Activated naive CD4-positive, alpha-beta T cell treated with anti-CD3 and anti-CD28 coated beads for 36 hours (primary cell): ENCODE measurements at regions of chr10 and their contacts with region 1.

Region 1: GRCh38 chr10:79487296-79488194 is 24.8 kb upstream of the EIF5AL1 start:
- DNase-seq: peak; percentile 47
- H3K4me3 Mint-ChIP-seq: no peak overlapping the region
- H3K27ac Mint-ChIP-seq: no peak overlapping the region
- H3K4me1 Mint-ChIP-seq: no peaks in the 10 kb centered on the region
- H3K27me3 Mint-ChIP-seq: no peaks in the 10 kb centered on the region

Region 2: GRCh38 chr10:79195091-79195923 is 292.2 kb before region 1 on chr10:
- CTCF ChIA-PET with region 1: no interaction called
- intact Hi-C with region 1: no loop called
- DNase-seq: peak; percentile 84
- H3K4me3 Mint-ChIP-seq: no peak overlapping the region
- H3K27ac Mint-ChIP-seq: no peak overlapping the region
- H3K4me1 Mint-ChIP-seq: peaks cover 5% of the 10 kb centered on the region
- H3K27me3 Mint-ChIP-seq: no peaks in the 10 kb centered on the region

Region 3: GRCh38 chr10:79400146-79401004 is 87.2 kb before region 1 on chr10:
- CTCF ChIA-PET with region 1: no interaction called
- intact Hi-C with region 1: loop called (anchors 1 kb)
- DNase-seq: peak; percentile 69
- H3K4me3 Mint-ChIP-seq: no peak overlapping the region
- H3K27ac Mint-ChIP-seq: no peak overlapping the region
- H3K4me1 Mint-ChIP-seq: no peaks in the 10 kb centered on the region
- H3K27me3 Mint-ChIP-seq: no peaks in the 10 kb centered on the region

Region 4: GRCh38 chr10:80144067-80144695 is 656.6 kb after region 1 on chr10:
- CTCF ChIA-PET with region 1: no interaction called
- intact Hi-C with region 1: loop called (anchors 10 kb)
- DNase-seq: peak; percentile 61
- H3K4me3 Mint-ChIP-seq: peak overlapping the region; percentile 67
- H3K27ac Mint-ChIP-seq: no peak overlapping the region
- H3K4me1 Mint-ChIP-seq: peaks cover 15% of the 10 kb centered on the region
- H3K27me3 Mint-ChIP-seq: peaks cover 5% of the 10 kb centered on the region

Region 5: GRCh38 chr10:80365510-80365909 is 878.0 kb after region 1 on chr10:
- CTCF ChIA-PET with region 1: no interaction called
- intact Hi-C with region 1: no loop called
- DNase-seq: no peak
- H3K4me3 Mint-ChIP-seq: no peak overlapping the region
- H3K27ac Mint-ChIP-seq: no peak overlapping the region
- H3K4me1 Mint-ChIP-seq: no peaks in the 10 kb centered on the region
- H3K27me3 Mint-ChIP-seq: no peaks in the 10 kb centered on the region